ENCODE measurements at regions of chr12 and their contacts with region 1.

Region 1: DNA sequence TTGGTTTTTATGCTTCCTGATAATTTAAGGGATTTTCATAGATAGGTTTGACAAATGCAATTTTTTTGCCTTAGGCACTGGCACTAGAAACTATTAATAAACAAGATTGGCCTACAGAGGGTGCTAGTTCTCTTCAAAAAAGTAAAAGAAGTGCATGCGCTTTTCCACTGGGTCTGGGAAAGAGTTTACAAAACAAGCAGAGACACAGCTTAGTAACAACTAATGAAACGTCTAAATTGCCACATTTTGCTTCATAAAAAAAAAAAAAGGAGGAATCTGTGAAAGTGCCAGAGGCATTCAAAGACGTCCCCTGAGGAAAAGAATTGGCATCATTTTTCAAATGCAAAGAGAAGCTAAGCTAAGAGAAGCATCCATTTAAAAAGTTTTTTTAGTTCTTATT is 58.3 kb upstream of the EEA1 start:
- DNase-seq: peak in 2 of 5 donors; percentile 84 to 91
- H3K4me3 ChIP-seq: no peak overlapping the region
- H3K27ac ChIP-seq: peak overlapping the region in 1 of 2 donors; percentile 61
- H3K4me1 ChIP-seq: peaks cover 0 to 5% (median 4%) of the 10 kb centered on the region in 3 donors
- H3K27me3 ChIP-seq: no peaks in the 10 kb centered on the region
- CTCF ChIP-seq: peak; percentile 63

Region 2: DNA sequence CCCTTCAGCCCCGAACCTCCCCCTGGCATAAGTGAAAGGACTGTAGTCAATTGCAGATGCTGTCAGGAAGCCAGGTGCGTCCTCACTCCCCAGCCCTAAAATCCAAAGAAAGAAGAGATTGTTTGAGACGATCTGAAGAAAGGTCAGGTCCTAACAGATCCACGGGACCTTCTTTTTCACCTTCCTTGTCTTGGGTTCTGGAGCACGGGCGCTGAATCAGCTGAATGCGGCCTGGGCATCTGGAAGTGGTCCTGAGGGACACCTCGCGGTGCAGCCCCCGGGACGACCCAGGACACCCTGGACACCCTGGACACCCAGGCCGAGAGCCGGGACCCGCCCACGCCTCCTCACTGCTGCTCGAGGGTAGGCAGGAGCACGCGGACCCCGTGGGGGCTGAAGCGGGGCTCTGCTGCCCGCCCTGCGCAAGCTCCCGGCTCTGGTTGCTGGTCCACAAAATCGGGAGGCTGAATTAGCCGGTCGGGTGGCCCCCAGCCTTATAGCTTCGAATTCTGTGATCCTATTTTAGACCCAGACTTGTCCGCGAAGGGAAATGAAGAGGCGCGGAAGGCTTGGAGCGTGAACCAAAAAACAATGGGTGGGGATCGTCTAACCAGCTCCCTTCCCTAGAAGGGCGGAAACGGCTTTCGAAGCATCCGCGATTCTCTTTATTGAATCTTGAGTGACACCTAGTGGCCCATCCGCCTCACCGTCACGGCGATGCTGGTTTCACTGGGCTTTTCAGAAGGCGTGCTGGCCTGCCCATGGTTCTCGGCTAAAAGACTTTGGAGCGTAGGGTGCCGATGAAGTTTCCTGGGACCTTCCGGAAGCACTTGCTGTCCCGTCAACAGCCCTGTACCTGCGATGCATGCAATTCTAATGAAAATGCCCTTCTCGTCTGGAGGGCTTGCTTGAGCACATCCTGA is 1114.6 kb after region 1 on chr12:
- intact Hi-C with region 1: loop called (anchors 10 kb)
- DNase-seq: peak; percentile 84 to 94 (median 91)
- H3K4me3 ChIP-seq: peak overlapping the region; percentile 71 to 79 (median 74)
- H3K27ac ChIP-seq: peak overlapping the region in 1 of 2 donors; percentile 15
- H3K4me1 ChIP-seq: peaks cover 0 to 6% (median 0%) of the 10 kb centered on the region in 3 donors
- H3K27me3 ChIP-seq: no peaks in the 10 kb centered on the region
- CTCF ChIP-seq: peak; percentile 96

Measured in kidney (tissue), 22 donors.